Activated CD8-positive, alpha-beta memory T cell treated with anti-CD3 and anti-CD28 coated beads, Interleukin-2, amount 10 ng/mL, durations not matched to agents 7 days and 5 days (primary cell): ENCODE measurements at regions of chr7 and their contacts with region 1.

Region 1: DNA sequence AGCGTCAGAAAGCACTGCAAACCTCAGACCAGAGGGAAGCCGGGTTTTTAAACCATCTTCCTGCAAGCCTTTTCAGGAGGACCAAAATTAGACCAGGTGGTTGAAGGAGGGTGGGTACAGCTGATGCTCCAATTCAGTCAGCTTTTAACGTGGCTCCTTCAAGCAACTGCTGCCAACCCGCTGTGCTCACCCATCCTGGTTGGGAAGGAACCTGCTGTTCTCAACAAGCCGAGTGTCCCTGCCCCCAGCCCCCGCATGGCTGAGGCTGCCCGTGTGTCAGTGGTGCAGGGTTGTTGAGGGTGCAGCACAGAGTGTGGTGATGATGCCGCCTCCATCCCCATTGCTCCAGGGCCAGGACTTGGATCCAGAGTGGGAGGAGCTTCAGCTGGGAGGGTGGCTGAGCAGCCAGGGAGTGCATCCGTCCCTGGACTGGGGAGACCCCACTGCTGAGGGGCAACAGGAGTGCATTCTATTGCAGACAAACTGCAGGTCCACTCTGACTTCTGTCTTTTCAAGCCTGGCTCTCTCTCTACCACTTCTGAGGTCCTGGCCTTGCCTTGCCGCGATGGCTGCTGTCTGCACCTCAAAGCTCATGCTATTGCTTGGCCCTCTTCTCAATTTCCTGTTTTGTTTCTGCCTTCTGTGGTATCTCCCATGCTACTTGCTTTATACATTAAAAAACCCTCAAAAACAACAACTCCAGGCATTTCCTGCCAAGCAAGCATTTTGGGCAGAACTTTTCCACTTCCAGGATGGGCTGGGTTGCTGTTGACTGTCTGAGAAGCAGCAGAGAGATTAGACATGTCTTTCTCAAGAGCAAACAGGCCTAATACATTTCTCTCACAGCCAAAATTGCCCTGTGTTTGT is 134.7 kb downstream of the DNAJB6 start:
- DNase-seq: peak; percentile 88
- ATAC-seq: peak; percentile 80
- H3K4me3 Mint-ChIP-seq: peak overlapping the region; percentile 45
- H3K27ac Mint-ChIP-seq: peak overlapping the region; percentile 97
- H3K4me1 Mint-ChIP-seq: peaks cover 44% of the 10 kb centered on the region
- H3K27me3 Mint-ChIP-seq: peaks cover under 1% of the 10 kb centered on the region

Region 2: GRCh38 chr7:157445956-157446295 is 25.6 kb before region 1 on chr7:
- CTCF ChIA-PET with region 1: no interaction called
- DNase-seq: peak; percentile 23
- ATAC-seq: no peak
- H3K4me3 Mint-ChIP-seq: no peak overlapping the region
- H3K27ac Mint-ChIP-seq: no peak overlapping the region
- H3K4me1 Mint-ChIP-seq: no peaks in the 10 kb centered on the region
- H3K27me3 Mint-ChIP-seq: peaks cover 8% of the 10 kb centered on the region

Region 3: DNA sequence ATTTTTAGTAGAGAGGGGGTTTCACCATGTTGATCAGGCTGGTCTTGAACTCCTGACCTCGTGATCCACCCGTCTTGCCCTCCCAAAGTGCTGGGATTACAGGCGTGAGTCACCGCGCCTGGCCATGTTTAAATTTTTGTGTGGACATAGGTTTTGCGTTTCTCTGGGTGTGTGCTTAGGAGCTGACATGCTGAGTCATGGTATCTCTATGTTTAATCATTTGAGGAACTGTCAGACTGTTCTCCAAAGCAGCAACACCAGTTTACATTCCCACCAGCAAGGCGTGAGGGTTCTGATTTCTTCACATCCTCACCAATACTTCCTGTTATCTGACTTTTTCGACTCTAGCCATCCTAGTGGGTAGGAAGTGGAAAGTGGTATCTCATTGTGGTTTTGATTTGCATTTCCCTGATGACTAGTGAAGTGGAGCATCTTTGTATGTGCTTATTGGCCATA is 19.0 kb after region 1 on chr7:
- CTCF ChIA-PET with region 1: interaction called, 12 read pairs
- DNase-seq: peak; percentile 86
- ATAC-seq: peak; percentile 93
- H3K4me3 Mint-ChIP-seq: peak overlapping the region; percentile 38
- H3K27ac Mint-ChIP-seq: peak overlapping the region; percentile 89
- H3K4me1 Mint-ChIP-seq: peaks cover 45% of the 10 kb centered on the region
- H3K27me3 Mint-ChIP-seq: peaks cover 42% of the 10 kb centered on the region

Region 4: DNA sequence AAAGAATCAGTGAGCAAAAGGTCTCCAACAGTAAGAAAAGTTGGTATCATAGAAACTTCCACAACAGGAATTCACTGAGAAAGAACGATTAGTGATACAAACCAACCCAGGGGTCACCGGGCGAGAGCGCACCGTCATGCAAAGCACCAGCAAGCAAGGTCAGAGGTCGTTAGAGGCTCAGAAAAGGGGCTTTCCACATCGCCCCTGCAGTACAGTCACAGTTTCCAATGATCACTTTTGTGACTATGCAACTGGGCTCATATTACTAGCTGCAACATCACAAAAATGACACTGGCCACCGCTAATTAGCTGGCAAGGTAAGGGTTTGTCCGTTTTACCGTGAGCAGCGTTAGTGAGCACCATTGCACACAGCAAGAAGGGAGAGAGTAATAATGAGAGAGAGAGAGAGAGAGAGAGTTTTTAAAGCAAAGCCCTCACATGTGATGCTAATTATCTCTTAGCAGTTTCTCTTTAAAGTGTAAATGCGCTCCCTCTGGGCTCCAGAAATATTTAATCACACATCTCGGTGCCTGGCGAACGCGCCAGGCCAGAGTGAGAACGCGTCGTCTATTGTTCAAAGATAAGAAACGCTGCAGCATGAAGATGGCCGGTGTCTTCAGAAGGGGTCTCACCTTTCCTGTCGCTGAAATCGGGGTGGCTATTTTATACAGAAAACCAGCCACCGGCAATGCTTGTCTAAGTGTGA is 102.8 kb after region 1 on chr7:
- CTCF ChIA-PET with region 1: no interaction called
- DNase-seq: no peak
- ATAC-seq: no peak
- H3K4me3 Mint-ChIP-seq: peak overlapping the region; percentile 2
- H3K27ac Mint-ChIP-seq: peak overlapping the region; percentile 18
- H3K4me1 Mint-ChIP-seq: peaks cover 69% of the 10 kb centered on the region
- H3K27me3 Mint-ChIP-seq: peaks cover 40% of the 10 kb centered on the region